ENCODE measurements at regions of chr1 and their contacts with region 1.

Region 1: GRCh38 chr1:241519308-241520079 is at the start of gene FH:
- DNase-seq: peak; percentile 88
- H3K4me3 ChIP-seq: peak within 1 kb of the TSS; percentile 75 to 98 (median 94)
- H3K27ac ChIP-seq: peak within 1 kb of the TSS; percentile 88 to 96 (median 94)
- H3K4me1 ChIP-seq: peaks cover 0 to 26% (median 7%) of the 10 kb centered on the region in 3 donors
- H3K27me3 ChIP-seq: peaks cover 0 to 27% (median 0%) of the 10 kb centered on the region in 4 donors
- CTCF ChIP-seq: peak in 1 of 6 experiments; percentile 5
- POLR2A ChIP-seq: peak in 3 of 4 donors; percentile 17 to 92 (median 75)
- total RNA-seq, gene FH: 44.6 to 101 (median 70.0) TPM

Region 2: DNA sequence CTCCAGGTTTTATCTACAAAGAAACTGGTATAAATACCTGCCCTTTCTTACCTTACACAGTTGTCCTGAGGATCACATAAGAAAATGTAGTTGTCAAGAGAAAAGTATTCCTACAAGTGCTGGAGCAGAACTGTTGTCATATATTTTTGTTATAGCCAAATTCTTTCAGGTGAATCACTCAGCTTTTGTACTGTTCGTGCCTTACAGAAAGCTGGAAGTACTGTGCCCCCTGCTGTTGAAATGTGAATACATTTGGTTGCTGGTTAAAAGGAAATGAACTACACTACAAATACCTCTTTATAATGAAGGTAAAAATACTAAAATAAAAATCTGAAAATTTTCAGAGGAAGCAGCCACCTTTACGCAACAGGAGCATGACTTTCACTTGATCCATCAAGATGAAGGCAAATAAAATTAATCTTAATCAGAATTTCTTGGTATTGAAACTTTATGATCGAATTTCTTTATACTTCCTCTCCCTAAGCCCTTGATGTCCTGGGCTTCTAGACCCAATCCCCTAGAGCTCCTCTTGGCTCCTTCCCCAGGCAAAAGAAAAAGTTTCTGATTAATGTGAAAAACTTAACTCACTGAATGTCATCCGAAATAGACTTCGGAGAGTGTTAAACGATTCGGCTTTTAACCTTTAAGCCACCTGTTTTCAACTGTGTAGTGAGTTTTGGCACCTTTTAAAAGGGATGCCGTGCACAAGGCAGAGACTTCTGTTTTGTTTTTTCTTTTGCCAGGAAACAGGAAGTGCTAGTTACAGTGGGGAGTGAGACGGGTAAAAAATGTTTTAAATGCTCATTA is 108.2 kb after region 1 on chr1:
- intact Hi-C with region 1: loop called (anchors 10 kb)
- DNase-seq: no peak
- H3K4me3 ChIP-seq: no peak overlapping the region
- H3K27ac ChIP-seq: peak overlapping the region in 1 of 4 donors; percentile 14
- H3K4me1 ChIP-seq: peaks cover 0 to 11% (median 0%) of the 10 kb centered on the region in 3 donors
- H3K27me3 ChIP-seq: no peaks in the 10 kb centered on the region
- CTCF ChIP-seq: peak in 5 of 6 experiments; percentile 32 to 67 (median 46)
- POLR2A ChIP-seq: no peak